Activated naive CD4-positive, alpha-beta T cell treated with anti-CD3 and anti-CD28 coated beads for 36 hours (primary cell): ENCODE measurements at regions of chr12 and their contacts with region 1.

Region 1: DNA sequence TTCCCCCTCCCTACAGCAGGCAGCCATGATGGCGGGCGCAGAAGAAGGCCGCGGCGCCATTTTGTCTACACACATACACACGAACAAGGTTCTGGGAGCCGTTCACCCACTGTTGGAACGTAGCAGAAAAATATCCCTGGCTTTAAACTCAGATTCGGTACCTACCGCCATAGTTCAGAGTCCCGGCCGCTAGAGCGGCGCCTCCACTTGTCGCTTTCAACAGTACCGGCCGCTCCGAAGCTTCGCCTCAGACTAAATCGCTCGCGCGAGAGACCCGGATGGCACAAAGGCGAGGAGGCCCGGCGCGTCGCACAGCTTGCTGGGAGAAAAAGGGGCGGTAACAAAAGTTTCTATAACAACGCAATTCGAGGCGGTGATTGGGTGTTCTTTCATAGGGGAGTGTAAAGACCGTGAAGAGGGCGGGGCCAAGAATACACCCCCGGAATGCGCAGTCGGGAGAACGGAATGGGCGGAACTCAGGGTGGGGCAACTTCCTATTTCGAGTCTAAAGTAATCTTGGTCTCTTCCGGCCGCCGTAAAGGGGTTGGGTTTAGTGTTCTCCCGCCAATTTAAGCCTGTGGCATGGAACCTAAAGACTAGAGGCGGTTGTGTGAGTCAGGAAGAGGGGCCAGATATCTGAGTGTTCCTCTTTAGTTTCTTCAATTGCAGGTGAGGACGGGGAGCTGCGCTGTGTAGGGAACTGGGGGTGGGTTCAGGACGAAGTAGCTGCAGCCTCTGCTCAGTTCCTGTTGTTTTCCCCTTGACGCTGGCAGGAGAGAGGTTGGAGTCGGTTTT is at the starts of genes KNTC1 and RSRC2:
- DNase-seq: peak; percentile 100
- H3K4me3 Mint-ChIP-seq: no peak within 1 kb of the TSS
- H3K27ac Mint-ChIP-seq: no peak within 1 kb of the TSS
- H3K4me1 Mint-ChIP-seq: peaks cover 49% of the 10 kb centered on the region
- H3K27me3 Mint-ChIP-seq: no peaks in the 10 kb centered on the region
- total RNA-seq, gene KNTC1: 141 to 142 TPM
- total RNA-seq, gene RSRC2: 117 to 127 TPM

Region 2: GRCh38 chr12:122225683-122226407 is 301.0 kb before region 1 on chr12 and contains the start of gene DIABLO:
- CTCF ChIA-PET with region 1: no interaction called
- intact Hi-C with region 1: loop called (anchors 1 kb)
- DNase-seq: peak; percentile 100
- H3K4me3 Mint-ChIP-seq: peak within 1 kb of the TSS; percentile 84
- H3K27ac Mint-ChIP-seq: peak within 1 kb of the TSS; percentile 79
- H3K4me1 Mint-ChIP-seq: peaks cover 39% of the 10 kb centered on the region
- H3K27me3 Mint-ChIP-seq: no peaks in the 10 kb centered on the region
- total RNA-seq, gene DIABLO: 46.1 to 48.1 TPM

Region 3: DNA sequence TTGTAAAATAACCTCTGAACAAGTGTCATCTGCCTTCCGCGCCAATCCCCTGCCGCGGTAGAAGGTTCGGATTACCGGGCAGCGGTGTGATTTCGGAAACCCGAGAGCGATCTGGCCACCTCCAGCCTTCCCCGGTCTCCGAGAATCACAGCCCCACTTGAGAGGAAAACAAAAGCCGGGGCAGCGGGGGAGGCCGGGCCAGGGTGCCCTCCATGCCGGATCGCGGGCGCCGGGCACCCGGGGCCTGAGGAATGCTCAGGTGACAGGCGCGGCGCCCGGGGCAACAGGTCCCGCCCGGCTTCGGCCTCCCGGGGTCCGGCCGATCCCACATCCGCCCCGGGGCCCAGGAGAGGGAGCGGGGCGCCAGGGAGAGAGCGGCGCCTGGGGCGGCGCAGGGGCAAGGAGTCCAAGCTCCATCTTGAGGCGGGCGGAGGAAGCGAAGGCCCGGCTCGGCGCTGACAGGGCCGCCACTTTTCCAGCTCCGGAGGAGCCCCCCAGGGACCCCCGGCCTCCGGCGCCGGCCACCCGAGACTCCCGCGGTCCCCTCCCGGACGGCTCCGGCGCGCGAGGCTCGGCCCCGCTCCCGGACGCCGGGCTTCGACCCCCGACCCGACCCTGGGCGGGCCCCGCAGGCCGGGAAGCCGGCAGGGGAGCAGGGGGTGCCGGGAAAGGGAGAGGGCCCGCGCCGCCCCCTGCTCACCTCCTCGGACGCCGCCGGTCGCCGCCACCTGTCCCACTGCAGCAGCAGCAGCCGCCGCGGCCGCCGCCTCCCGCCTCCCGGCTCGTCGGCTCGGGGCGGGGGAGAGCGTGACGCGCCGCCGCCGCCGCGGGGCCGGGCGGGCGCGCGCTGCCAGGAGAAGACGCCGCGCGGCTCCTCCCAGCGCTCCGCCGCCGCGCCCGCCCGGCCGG is 104.8 kb before region 1 on chr12 and contains the start of gene CLIP1:
- CTCF ChIA-PET with region 1: interaction called, 5 read pairs
- intact Hi-C with region 1: loop called (anchors 2 kb)
- DNase-seq: peak; percentile 62
- H3K4me3 Mint-ChIP-seq: peak within 1 kb of the TSS; percentile 88
- H3K27ac Mint-ChIP-seq: peak within 1 kb of the TSS; percentile 90
- H3K4me1 Mint-ChIP-seq: peaks cover 38% of the 10 kb centered on the region
- H3K27me3 Mint-ChIP-seq: peaks cover 3% of the 10 kb centered on the region
- total RNA-seq, gene CLIP1: 50.7 to 51.3 TPM

Region 4: DNA sequence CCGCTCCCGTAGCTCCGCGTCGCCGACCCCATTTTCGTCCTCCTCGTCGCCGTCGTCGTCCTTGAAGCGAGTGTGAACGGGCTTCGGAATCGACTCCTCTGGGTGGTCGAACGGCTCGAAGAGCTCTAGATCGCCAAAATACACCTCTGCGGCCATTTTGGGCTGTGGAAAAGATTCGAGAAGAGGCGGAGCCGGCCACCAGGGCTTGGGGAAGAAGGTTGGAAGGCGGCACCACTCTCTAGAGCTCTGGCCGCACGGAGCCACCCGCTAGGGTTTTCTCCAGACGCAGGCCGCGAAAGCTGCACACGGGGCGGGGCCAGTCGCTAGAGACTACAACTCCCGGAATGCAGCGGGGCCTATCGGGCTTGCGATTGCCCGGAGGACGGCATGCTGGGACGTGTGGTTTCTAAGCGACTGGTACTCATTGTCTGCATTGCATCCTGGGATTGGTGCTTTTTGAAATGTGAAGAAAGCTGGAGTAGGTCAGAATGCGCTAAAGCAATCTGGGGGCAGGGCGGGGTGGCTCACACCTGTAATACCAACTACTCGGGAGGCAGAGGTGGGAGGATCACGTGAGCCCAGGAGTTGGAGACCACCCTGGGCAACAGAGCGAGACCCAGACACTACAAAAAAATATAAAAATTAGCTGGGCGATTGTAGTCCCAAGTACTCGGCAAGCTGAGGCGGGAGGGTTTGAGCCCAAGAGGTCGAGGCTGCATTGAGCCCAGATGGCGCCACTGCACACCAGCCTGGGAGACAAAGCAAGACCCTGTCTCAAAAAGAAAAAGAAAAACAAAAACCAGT is 26.0 kb before region 1 on chr12 and contains the start of gene ZCCHC8:
- CTCF ChIA-PET with region 1: interaction called, 5 read pairs
- intact Hi-C with region 1: loop called (anchors 1 kb)
- DNase-seq: peak; percentile 98
- H3K4me3 Mint-ChIP-seq: peak within 1 kb of the TSS; percentile 93
- H3K27ac Mint-ChIP-seq: peak within 1 kb of the TSS; percentile 97
- H3K4me1 Mint-ChIP-seq: peaks cover 39% of the 10 kb centered on the region
- H3K27me3 Mint-ChIP-seq: no peaks in the 10 kb centered on the region
- total RNA-seq, gene ZCCHC8: 25.9 to 26.0 TPM

Region 5: DNA sequence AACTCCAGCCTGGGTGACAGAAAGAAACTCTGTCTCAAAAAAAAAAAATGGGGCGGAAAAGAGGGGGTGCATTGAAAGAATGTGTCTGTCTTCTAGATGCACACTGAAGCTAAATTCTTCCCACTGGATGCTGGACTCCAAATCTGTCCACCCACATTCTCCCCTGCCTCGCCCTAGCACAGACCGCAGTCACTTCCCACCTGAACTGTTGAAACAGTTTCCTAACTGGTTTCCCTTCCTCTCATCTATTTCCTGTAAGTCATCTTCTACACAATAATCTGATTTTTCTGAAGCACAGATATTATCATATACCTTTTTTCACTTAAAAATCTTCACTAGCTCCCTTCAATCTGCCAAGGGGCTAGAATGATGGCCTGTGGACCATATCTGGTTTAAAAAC is 205.3 kb after region 1 on chr12:
- CTCF ChIA-PET with region 1: no interaction called
- intact Hi-C with region 1: loop called (anchors 2 kb)
- DNase-seq: peak; percentile 69
- H3K4me3 Mint-ChIP-seq: no peak overlapping the region
- H3K27ac Mint-ChIP-seq: peak overlapping the region; percentile 89
- H3K4me1 Mint-ChIP-seq: peaks cover 75% of the 10 kb centered on the region
- H3K27me3 Mint-ChIP-seq: no peaks in the 10 kb centered on the region

Region 6: GRCh38 chr12:122965851-122966722 is 439.2 kb after region 1 on chr12 and contains the start of gene ABCB9:
- CTCF ChIA-PET with region 1: no interaction called
- intact Hi-C with region 1: loop called (anchors 2 kb)
- DNase-seq: peak; percentile 98
- H3K4me3 Mint-ChIP-seq: peak within 1 kb of the TSS; percentile 64
- H3K27ac Mint-ChIP-seq: no peak within 1 kb of the TSS
- H3K4me1 Mint-ChIP-seq: peaks cover 5% of the 10 kb centered on the region
- H3K27me3 Mint-ChIP-seq: no peaks in the 10 kb centered on the region
- total RNA-seq, gene ABCB9: 5.1 to 5.9 TPM

Region 7: DNA sequence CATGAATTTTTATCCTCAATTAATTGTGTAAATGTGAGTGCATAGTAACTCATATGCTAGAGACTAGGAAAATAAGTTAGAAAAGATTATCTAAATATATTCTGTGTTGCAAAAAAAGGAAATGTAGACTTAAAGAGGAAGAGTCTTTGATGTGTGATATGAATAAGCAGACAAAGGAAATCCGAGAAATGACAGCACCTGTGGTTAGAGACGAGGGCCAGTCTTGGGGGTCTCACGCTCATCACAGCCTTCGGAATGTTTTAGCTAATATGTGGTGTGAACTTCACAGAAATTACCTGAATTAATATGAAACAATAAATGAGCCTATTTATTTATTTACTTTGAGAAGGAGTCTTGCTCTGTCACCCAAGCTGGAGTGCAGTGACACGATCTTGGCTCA is 1196.9 kb after region 1 on chr12:
- CTCF ChIA-PET with region 1: no interaction called
- intact Hi-C with region 1: no loop called
- DNase-seq: peak; percentile 26
- H3K4me3 Mint-ChIP-seq: no peak overlapping the region
- H3K27ac Mint-ChIP-seq: no peak overlapping the region
- H3K4me1 Mint-ChIP-seq: peaks cover 26% of the 10 kb centered on the region
- H3K27me3 Mint-ChIP-seq: no peaks in the 10 kb centered on the region